ENCODE measurements at regions of chr18 and their contacts with region 1.

Region 1: GRCh38 chr18:55731594-55732042 is 143.6 kb upstream of the TCF4 start:
- DNase-seq: no peak

Region 2: DNA sequence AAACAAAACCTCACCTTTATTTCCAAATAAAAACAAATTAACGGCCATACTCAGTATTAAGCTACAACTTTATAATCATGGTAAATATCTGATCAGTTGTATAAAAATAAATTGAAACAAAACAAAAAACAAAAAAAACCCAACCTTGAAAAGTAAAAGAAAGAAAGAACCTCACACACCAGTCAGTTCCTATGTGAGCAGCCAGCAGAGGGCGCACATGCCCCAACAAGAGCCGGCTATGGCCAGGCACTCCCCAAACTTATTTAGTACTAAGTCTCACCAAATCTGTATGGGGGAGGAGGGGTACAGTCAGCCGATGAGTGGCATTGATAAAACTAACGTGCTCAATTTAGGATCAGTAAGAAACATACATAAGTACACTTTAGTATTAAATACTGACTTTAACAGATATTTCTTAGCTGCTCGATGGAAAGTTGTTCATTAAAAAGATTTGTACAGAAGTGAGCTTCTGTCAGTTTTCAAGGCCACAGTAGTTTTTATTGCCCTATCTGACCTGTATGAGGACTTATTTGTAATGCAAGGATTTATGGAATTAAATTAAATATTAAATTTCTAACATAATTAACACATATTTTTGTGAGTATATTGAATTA is 316.3 kb before region 1 on chr18:
- intact Hi-C with region 1: loop called (anchors 2 kb)
- DNase-seq: peak; percentile 89

Region 3: GRCh38 chr18:56021136-56021808 is 289.7 kb after region 1 on chr18:
- intact Hi-C with region 1: no loop called
- DNase-seq: no peak